ENCODE measurements at regions of chr14 and their contacts with region 1.

Region 1: GRCh38 chr14:102316743-102317563 is 2.6 kb upstream of the ZNF839 start:
- DNase-seq: peak; percentile 90 to 99 (median 95)
- ATAC-seq: peak; percentile 77
- H3K4me3 ChIP-seq: peak overlapping the region; percentile 84
- H3K4me3 Mint-ChIP-seq: peak overlapping the region; percentile 91 to 99 (median 97)
- H3K27ac ChIP-seq: peak overlapping the region; percentile 62
- H3K27ac Mint-ChIP-seq: peak overlapping the region; percentile 95 to 99 (median 98)
- H3K4me1 ChIP-seq: peaks cover 37 to 43% of the 10 kb centered on the region in 2 donors
- H3K4me1 Mint-ChIP-seq: peaks cover 34 to 76% (median 64%) of the 10 kb centered on the region in 7 donors
- H3K27me3 ChIP-seq: no peaks in the 10 kb centered on the region
- H3K27me3 Mint-ChIP-seq: peaks cover 0 to 6% (median 0%) of the 10 kb centered on the region in 5 donors

Region 2: DNA sequence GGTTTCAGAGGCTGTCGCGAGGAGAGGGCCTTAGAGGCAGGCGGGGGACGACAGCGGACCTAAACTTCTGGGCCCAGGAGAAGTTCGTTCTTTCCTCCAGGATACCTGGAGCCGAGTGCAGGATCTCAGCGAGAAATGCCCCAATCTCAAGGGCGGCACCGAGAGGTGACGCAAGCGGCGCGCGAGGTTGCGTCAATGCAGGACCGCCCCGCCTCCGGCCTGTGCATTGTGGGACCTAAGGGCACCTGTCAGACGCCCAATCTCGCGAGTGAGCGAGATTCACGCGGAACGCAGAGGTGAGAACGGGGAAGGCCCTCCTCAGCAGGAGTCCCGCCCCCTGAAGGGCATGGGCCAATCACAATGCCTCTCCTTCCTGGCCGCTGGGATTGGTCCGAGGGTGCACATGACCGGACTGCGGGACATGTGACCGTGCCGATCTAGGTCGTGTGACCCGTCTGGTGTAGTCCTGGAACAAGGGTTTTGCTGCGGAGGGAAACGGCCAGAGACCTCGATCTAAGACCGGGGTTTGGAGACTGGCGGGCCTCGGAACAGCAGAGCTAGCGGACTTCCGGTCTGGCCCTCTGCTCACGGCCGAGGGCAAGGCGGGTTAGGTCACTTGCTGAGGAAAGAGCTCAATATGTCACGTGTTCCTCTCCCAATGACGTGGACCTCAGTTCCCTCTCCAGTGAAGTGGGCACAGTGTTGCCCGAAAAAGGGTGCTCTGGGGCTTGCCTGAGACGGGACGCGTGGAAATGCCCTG is 368.9 kb before region 1 on chr14:
- CTCF ChIA-PET with region 1: interaction called, 3 read pairs
- POLR2A ChIA-PET with region 1: interaction called, 4 read pairs
- intact Hi-C with region 1: loop called in 1 of 2 experiments (anchors 1 kb)
- DNase-seq: peak; percentile 95 to 100 (median 99)
- ATAC-seq: peak; percentile 97
- H3K4me3 ChIP-seq: peak overlapping the region; percentile 96
- H3K4me3 Mint-ChIP-seq: peak overlapping the region; percentile 86 to 99 (median 98)
- H3K27ac ChIP-seq: peak overlapping the region; percentile 99
- H3K27ac Mint-ChIP-seq: peak overlapping the region; percentile 97 to 100 (median 99)
- H3K4me1 ChIP-seq: peaks cover 9 to 10% of the 10 kb centered on the region in 2 donors
- H3K4me1 Mint-ChIP-seq: peaks cover 17 to 34% (median 25%) of the 10 kb centered on the region in 7 donors
- H3K27me3 ChIP-seq: no peaks in the 10 kb centered on the region
- H3K27me3 Mint-ChIP-seq: peaks cover 15 to 37% (median 30%) of the 10 kb centered on the region in 5 donors

Region 3: DNA sequence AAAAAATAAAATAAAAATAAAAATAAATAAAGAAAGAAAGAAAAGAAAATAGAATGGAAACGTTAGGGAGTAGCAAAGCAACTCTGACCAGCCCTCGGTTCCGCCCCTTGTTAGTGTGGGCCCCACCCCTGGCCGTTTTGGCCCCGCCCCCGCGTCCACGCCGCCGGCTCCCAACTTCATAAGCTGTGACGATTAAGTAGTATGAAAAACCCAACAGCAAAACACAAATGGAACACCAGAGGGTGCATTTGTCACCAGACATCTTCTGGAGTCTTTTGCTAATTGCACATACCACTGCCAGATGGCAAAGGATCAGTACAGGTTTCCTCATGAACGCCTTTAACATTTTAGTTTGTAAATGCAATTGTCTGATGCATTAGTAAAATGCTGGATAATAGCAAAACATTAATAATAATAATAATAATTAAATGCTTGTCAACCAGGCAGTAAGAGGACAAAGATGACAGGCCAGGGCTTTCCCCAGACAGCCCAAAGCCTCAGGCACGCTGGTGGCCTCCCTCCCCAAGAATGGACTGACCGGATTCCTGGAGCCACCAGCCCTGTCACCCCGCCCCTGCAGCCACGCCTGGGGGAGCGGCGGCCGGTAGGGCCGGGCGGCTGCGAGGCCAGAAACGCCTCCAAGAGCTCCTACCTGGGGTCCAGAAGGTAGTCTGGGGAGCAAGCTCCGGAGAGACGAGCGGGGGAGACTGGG is 253.7 kb before region 1 on chr14:
- CTCF ChIA-PET with region 1: interaction called, 3 read pairs
- POLR2A ChIA-PET with region 1: no interaction called
- intact Hi-C with region 1: loop called in 1 of 2 experiments (anchors 1 kb)
- DNase-seq: peak; percentile 42 to 70 (median 57)
- ATAC-seq: peak; percentile 98
- H3K4me3 ChIP-seq: no peak overlapping the region
- H3K4me3 Mint-ChIP-seq: no peak overlapping the region
- H3K27ac ChIP-seq: no peak overlapping the region
- H3K27ac Mint-ChIP-seq: no peak overlapping the region
- H3K4me1 ChIP-seq: peaks cover 0 to 10% of the 10 kb centered on the region in 2 donors
- H3K4me1 Mint-ChIP-seq: peaks cover 0 to 8% (median under 1%) of the 10 kb centered on the region in 7 donors
- H3K27me3 ChIP-seq: no peaks in the 10 kb centered on the region
- H3K27me3 Mint-ChIP-seq: peaks cover 0 to 3% (median 0%) of the 10 kb centered on the region in 5 donors

Region 4: GRCh38 chr14:102139248-102140026 is 177.5 kb before region 1 on chr14 and contains the start of gene WDR20:
- CTCF ChIA-PET with region 1: no interaction called
- POLR2A ChIA-PET with region 1: interaction called, 3 read pairs
- intact Hi-C with region 1: loop called (anchors 1 kb)
- DNase-seq: peak; percentile 98 to 100 (median 99)
- ATAC-seq: peak; percentile 98
- H3K4me3 ChIP-seq: peak within 1 kb of the TSS; percentile 80
- H3K4me3 Mint-ChIP-seq: peak within 1 kb of the TSS; percentile 96 to 99 (median 98)
- H3K27ac ChIP-seq: peak within 1 kb of the TSS; percentile 90
- H3K27ac Mint-ChIP-seq: peak within 1 kb of the TSS; percentile 95 to 99 (median 96)
- H3K4me1 ChIP-seq: peaks cover 18 to 22% of the 10 kb centered on the region in 2 donors
- H3K4me1 Mint-ChIP-seq: peaks cover 17 to 36% (median 26%) of the 10 kb centered on the region in 7 donors
- H3K27me3 ChIP-seq: no peaks in the 10 kb centered on the region
- H3K27me3 Mint-ChIP-seq: no peaks in the 10 kb centered on the region
- total RNA-seq, gene WDR20: 33.1 to 67.8 (median 47.5) TPM

Region 5: GRCh38 chr14:102304611-102305509 is 12.1 kb before region 1 on chr14 and contains the start of gene MOK:
- CTCF ChIA-PET with region 1: interaction called, 15 read pairs
- POLR2A ChIA-PET with region 1: interaction called, 40 read pairs
- intact Hi-C with region 1: loop called (anchors 1 kb)
- DNase-seq: peak; percentile 94 to 99 (median 98)
- ATAC-seq: peak; percentile 95
- H3K4me3 ChIP-seq: peak within 1 kb of the TSS; percentile 75
- H3K4me3 Mint-ChIP-seq: peak within 1 kb of the TSS; percentile 86 to 99 (median 96)
- H3K27ac ChIP-seq: peak within 1 kb of the TSS; percentile 81
- H3K27ac Mint-ChIP-seq: peak within 1 kb of the TSS; percentile 87 to 99 (median 95)
- H3K4me1 ChIP-seq: peaks cover 0 to 2% of the 10 kb centered on the region in 2 donors
- H3K4me1 Mint-ChIP-seq: peaks cover 0 to 16% (median 13%) of the 10 kb centered on the region in 7 donors
- H3K27me3 ChIP-seq: no peaks in the 10 kb centered on the region
- H3K27me3 Mint-ChIP-seq: peaks cover 0 to 16% (median 0%) of the 10 kb centered on the region in 5 donors
- total RNA-seq, gene MOK: 1.3 to 3.5 (median 1.9) TPM

Region 6: DNA sequence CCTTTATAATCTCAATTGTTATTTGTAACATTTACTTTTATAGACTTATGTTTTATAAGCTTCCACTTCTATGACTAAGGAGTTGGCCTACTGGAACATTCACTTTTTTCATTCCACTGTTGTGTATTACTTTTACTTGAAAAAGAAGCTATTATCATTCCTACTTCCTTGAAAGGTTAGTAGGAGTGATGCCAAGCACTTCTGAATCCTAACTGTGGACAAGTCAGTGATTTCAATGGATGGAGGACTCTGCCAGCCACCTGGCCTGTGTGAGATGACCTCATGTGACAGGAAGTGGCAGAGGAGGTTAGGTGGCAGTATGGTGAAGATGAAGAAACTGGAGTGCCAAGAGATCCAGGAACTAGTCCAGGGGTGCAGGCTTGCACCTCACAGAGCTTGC is 91.8 kb after region 1 on chr14:
- CTCF ChIA-PET with region 1: no interaction called
- POLR2A ChIA-PET with region 1: no interaction called
- intact Hi-C with region 1: no loop called
- DNase-seq: no peak
- ATAC-seq: no peak
- H3K4me3 ChIP-seq: no peak overlapping the region
- H3K4me3 Mint-ChIP-seq: no peak overlapping the region
- H3K27ac ChIP-seq: no peak overlapping the region
- H3K27ac Mint-ChIP-seq: peak overlapping the region in 4 of 9 donors; percentile 4 to 39 (median 19)
- H3K4me1 ChIP-seq: no peaks in the 10 kb centered on the region
- H3K4me1 Mint-ChIP-seq: peaks cover 3 to 12% (median 5%) of the 10 kb centered on the region in 7 donors
- H3K27me3 ChIP-seq: no peaks in the 10 kb centered on the region
- H3K27me3 Mint-ChIP-seq: no peaks in the 10 kb centered on the region

Region 7: GRCh38 chr14:102437997-102438915 is 121.3 kb after region 1 on chr14:
- CTCF ChIA-PET with region 1: no interaction called
- POLR2A ChIA-PET with region 1: no interaction called
- intact Hi-C with region 1: no loop called
- DNase-seq: peak; percentile 16 to 72 (median 49)
- ATAC-seq: peak; percentile 95
- H3K4me3 ChIP-seq: no peak overlapping the region
- H3K4me3 Mint-ChIP-seq: peak overlapping the region in 1 of 10 donors; percentile 68
- H3K27ac ChIP-seq: no peak overlapping the region
- H3K27ac Mint-ChIP-seq: no peak overlapping the region
- H3K4me1 ChIP-seq: peaks cover 0 to 5% of the 10 kb centered on the region in 2 donors
- H3K4me1 Mint-ChIP-seq: peaks cover 0 to 8% (median 0%) of the 10 kb centered on the region in 7 donors
- H3K27me3 ChIP-seq: no peaks in the 10 kb centered on the region
- H3K27me3 Mint-ChIP-seq: no peaks in the 10 kb centered on the region

Region 8: GRCh38 chr14:102509744-102510615 is 193.0 kb after region 1 on chr14 and contains the start of gene ANKRD9:
- CTCF ChIA-PET with region 1: no interaction called
- POLR2A ChIA-PET with region 1: interaction called, 3 read pairs
- intact Hi-C with region 1: loop called in 1 of 2 experiments (anchors 2 kb)
- DNase-seq: peak; percentile 48 to 94 (median 66)
- ATAC-seq: peak; percentile 83
- H3K4me3 ChIP-seq: peak within 1 kb of the TSS; percentile 75
- H3K4me3 Mint-ChIP-seq: peak within 1 kb of the TSS; percentile 85 to 91 (median 88)
- H3K27ac ChIP-seq: peak within 1 kb of the TSS; percentile 58
- H3K27ac Mint-ChIP-seq: peak within 1 kb of the TSS in 8 of 9 donors; percentile 20 to 74 (median 59)
- H3K4me1 ChIP-seq: peaks cover 4 to 14% of the 10 kb centered on the region in 2 donors
- H3K4me1 Mint-ChIP-seq: peaks cover 0 to 21% (median 10%) of the 10 kb centered on the region in 7 donors
- H3K27me3 ChIP-seq: no peaks in the 10 kb centered on the region
- H3K27me3 Mint-ChIP-seq: peaks cover 0 to 3% (median 0%) of the 10 kb centered on the region in 5 donors
- total RNA-seq, gene ANKRD9: 1.1 to 8.1 (median 2.2) TPM

Measured in naive thymus-derived CD4-positive, alpha-beta T cell (primary cell).